PC-9 (cell line): ENCODE measurements at regions of chr16 and their contacts with region 1.

Region 1: DNA sequence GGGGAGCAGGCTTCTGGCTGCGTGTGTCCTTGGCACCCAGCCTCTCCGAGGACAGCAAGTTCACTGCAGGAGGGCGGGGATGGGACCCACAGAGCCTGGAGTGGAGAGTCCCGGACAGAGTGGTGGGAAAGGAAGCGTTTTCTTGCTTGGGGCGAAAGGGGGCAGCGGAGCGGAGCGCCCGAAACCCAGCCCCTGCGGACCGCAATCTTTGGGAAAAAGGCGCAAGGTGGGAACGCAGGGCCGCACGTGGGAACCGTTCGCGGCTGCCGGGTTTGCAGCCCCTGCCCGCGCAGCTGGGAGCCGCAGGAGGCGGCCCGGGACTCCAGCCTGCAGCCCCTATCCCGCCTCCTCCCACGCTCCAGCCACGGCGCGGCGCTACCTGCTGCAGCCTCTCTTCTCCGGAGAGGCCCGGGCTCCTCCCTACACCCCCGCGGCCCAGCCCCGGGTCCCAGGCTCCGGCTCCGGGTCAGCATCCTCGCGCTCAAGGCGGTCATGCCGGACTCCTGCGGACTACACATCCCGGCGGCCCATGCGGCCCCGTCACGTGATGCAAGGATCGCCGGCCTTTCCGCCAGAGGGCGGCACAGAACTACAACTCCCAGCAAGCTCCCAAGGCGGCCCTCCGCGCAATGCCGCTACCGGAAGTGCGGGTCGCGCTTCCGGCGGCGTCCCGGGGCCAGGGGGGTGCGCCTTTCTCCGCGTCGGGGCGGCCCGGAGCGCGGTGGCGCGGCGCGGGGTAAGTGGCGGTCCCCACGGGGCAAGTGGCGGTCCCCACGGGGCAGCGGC is at the starts of genes NTHL1 and TSC2:
- DNase-seq: peak; percentile 89 to 98
- H3K4me3 ChIP-seq: peak within 1 kb of the TSS; percentile 88
- H3K27ac ChIP-seq: no peak within 1 kb of the TSS
- H3K4me1 ChIP-seq: peaks cover 29% of the 10 kb centered on the region
- H3K27me3 ChIP-seq: no peaks in the 10 kb centered on the region
- CTCF ChIP-seq: peak; percentile 55
- total RNA-seq, gene NTHL1: 47.3 and 66.6 TPM in 2 replicates
- total RNA-seq, gene TSC2: 166 and 170 TPM in 2 replicates

Region 2: DNA sequence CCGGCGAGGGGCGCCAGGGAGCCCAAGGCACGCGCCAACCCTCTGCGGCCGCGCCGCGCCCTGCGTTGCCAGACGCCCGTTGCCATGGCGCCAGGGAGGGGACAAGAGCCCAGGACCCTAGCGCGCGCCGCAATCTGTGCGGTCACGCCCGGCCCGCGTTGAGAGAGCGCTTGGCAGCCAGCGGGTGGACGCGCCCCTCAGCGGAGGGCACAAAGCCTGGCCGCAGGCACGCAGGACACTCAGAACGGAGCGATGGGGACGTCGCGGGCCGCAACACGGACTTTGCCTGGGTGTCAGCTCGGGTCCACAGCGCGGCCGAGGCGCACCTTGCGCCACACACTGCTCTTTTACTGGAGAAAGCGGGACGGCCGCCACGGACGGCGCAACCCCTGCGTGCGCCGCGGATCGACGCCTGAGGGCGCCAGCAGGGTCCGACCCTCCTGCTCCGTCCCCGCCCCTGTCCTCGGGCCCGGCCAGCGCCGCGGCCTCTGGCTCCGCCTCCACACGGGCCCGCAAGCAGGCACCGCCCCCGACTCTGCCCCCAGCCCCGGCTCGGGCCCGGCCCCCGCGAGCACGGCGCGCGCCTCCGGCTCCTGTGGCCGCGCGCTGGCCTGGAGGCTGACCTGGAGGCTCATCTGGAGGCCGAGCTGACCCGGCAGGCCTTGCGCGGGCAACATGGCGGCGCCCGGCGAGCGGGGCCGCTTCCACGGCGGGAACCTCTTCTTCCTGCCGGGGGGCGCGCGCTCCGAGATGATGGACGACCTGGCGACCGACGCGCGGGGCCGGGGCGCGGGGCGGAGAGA is 63.8 kb before region 1 on chr16 and contains the start of gene GFER:
- CTCF ChIA-PET with region 1: no interaction called
- POLR2A ChIA-PET with region 1: interaction called, 5 read pairs
- intact Hi-C with region 1: loop called (anchors 5 kb)
- DNase-seq: peak; percentile 73 to 98
- H3K4me3 ChIP-seq: peak within 1 kb of the TSS; percentile 93
- H3K27ac ChIP-seq: no peak within 1 kb of the TSS
- H3K4me1 ChIP-seq: peaks cover 67% of the 10 kb centered on the region
- H3K27me3 ChIP-seq: no peaks in the 10 kb centered on the region
- CTCF ChIP-seq: no peak; the same call in 1 of the 2 replicates
- total RNA-seq, gene GFER: 59.7 and 63.8 TPM in 2 replicates

Region 3: GRCh38 chr16:2033057-2033908 is 14.2 kb before region 1 on chr16:
- CTCF ChIA-PET with region 1: interaction called, 3 read pairs
- POLR2A ChIA-PET with region 1: interaction called, 4 read pairs
- intact Hi-C with region 1: loop called (anchors 1 kb)
- DNase-seq: peak in 1 of 2 experiments; percentile 71
- H3K4me3 ChIP-seq: no peak overlapping the region
- H3K27ac ChIP-seq: no peak overlapping the region
- H3K4me1 ChIP-seq: peaks cover 10% of the 10 kb centered on the region
- H3K27me3 ChIP-seq: no peaks in the 10 kb centered on the region
- CTCF ChIP-seq: no peak

Region 4: DNA sequence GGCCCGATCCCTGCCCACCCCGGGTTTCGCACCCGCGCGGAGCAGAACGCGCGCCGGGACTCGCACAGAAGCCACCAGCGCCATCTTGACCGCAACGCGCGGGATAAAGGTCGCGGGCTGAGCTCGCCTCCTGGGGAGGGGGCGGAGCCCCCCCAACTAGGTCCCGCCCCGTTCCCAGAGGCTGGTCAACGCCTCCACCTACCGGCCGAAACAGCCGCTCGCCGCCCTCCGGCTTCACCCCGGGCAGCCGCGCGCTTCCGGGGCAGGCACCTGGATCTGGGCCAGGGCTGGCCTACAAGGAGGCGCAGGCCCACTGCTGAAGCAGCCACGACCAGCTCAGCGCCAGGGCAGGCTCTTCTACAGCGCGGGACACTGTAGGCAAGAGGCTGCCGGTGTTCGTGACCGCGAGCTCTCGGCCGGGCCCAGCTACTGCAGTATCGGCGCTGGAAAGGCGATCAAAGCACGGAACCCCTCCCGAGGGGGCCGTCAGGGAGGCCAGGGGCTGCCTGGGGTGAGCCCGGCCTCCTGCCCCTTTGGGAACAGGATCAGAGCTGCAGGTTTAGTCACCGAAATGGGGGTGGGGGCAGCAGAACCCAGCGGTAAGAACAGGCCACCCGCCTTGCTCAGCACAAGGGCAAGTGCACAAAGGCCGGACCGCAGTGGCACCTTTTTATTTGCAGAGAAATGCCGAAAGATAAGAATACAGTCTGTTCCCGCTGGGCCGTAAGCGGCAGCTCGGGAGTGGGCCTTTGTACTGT is 204.1 kb after region 1 on chr16 and contains the start of gene ECI1:
- CTCF ChIA-PET with region 1: no interaction called
- POLR2A ChIA-PET with region 1: no interaction called
- intact Hi-C with region 1: no loop called
- DNase-seq: peak; percentile 84 to 98
- H3K4me3 ChIP-seq: peak within 1 kb of the TSS; percentile 91
- H3K27ac ChIP-seq: peak within 1 kb of the TSS; percentile 86
- H3K4me1 ChIP-seq: peaks cover 22% of the 10 kb centered on the region
- H3K27me3 ChIP-seq: no peaks in the 10 kb centered on the region
- CTCF ChIP-seq: peak; percentile 69
- total RNA-seq, gene ECI1: 131 and 216 TPM in 2 replicates

Region 5: GRCh38 chr16:2603165-2604015 is 555.9 kb after region 1 on chr16:
- CTCF ChIA-PET with region 1: no interaction called
- POLR2A ChIA-PET with region 1: no interaction called
- intact Hi-C with region 1: loop called (anchors 10 kb)
- DNase-seq: peak; percentile 92 to 98
- H3K4me3 ChIP-seq: peak overlapping the region; percentile 79
- H3K27ac ChIP-seq: peak overlapping the region; percentile 56
- H3K4me1 ChIP-seq: peaks cover 7% of the 10 kb centered on the region
- H3K27me3 ChIP-seq: no peaks in the 10 kb centered on the region
- CTCF ChIP-seq: no peak